HEK293T (cell line): ENCODE measurements at regions of chr13 and their contacts with region 1.

Region 1: GRCh38 chr13:95403828-95404522 is 102.7 kb upstream of the ABCC4 start:
- DNase-seq: peak; percentile 83

Region 2: DNA sequence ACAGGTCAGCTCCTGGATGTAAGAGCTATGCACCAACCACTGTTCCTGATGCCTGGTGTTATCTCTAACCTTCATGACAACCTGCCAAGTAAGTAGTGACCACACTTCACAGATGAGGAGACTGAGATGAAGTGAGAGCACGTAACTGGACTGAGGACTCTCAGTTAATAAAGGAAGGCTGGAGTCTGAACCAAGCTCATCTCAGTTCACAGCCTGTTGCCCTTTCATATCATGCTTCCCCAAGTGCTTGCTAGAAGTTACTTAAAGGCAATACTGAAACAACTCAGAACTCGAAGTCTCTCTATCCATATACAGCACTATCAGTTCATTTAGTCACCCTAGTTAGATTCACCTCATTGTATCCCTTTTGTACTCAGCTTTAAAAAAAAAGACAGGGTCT is 222.4 kb before region 1 on chr13:
- CTCF ChIA-PET with region 1: interaction called, 20 read pairs
- POLR2A ChIA-PET with region 1: no interaction called
- DNase-seq: no peak

Region 3: GRCh38 chr13:95191821-95192563 is 212.0 kb before region 1 on chr13:
- CTCF ChIA-PET with region 1: interaction called, 41 read pairs
- POLR2A ChIA-PET with region 1: no interaction called
- DNase-seq: peak; percentile 74

Region 4: GRCh38 chr13:95378603-95379002 is 25.4 kb before region 1 on chr13:
- CTCF ChIA-PET with region 1: interaction called, 11 read pairs
- POLR2A ChIA-PET with region 1: no interaction called
- DNase-seq: no peak